Caco-2 (cell line): ENCODE measurements at regions of chr19 and their contacts with region 1.

Region 1: GRCh38 chr19:49539192-49539952 is 11.6 kb downstream of the RCN3 start:
- DNase-seq: no peak
- H3K4me3 ChIP-seq: no peak overlapping the region
- H3K4me3 Mint-ChIP-seq: no peak overlapping the region
- H3K27ac Mint-ChIP-seq: peak overlapping the region; percentile 27
- H3K4me1 ChIP-seq: no peaks in the 10 kb centered on the region
- H3K4me1 Mint-ChIP-seq: peaks cover 8% of the 10 kb centered on the region
- H3K27me3 ChIP-seq: no peaks in the 10 kb centered on the region
- H3K27me3 Mint-ChIP-seq: no peaks in the 10 kb centered on the region
- CTCF ChIP-seq: no peak

Region 2: DNA sequence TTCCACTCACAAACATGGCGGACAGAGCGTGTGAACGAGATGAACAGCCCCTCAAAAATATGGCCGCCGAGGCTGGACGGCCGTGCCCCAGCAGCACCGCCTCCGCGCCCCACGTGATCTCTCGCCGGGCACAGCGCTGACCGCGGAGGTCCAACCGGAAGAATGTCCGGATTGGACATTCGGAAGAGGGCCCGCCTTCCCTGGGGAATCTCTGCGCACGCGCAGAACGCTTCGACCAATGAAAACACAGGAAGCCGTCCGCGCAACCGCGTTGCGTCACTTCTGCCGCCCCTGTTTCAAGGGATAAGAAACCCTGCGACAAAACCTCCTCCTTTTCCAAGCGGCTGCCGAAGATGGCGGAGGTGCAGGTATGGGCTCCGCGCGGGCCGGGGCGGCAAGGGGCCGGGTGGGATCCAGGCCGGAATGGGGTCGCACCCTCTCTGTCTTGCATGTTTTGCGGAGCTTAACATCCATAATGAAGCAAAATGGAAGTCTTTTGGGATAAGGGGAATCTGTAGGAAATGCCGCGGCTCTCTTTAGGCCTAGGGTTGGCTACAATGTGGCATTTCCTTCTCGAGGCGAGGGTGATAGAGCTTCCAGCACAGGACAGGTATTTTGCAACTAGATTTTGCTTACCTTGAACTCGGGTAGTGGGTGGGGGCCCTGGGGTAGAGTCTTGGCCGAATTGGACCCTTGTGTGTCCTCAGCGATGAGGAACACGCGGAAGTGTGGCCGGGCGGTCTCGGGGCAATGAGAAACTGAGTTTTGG is 51.9 kb before region 1 on chr19 and contains the start of gene RPL13A:
- CTCF ChIA-PET with region 1: no interaction called
- POLR2A ChIA-PET with region 1: no interaction called
- intact Hi-C with region 1: no loop called
- DNase-seq: peak; percentile 99 to 100
- H3K4me3 ChIP-seq: peak within 1 kb of the TSS; percentile 88
- H3K4me3 Mint-ChIP-seq: peak within 1 kb of the TSS; percentile 97
- H3K27ac Mint-ChIP-seq: peak within 1 kb of the TSS; percentile 99
- H3K4me1 ChIP-seq: peaks cover 13% of the 10 kb centered on the region; the same call in 1 of the 2 replicates
- H3K4me1 Mint-ChIP-seq: no peaks in the 10 kb centered on the region
- H3K27me3 ChIP-seq: no peaks in the 10 kb centered on the region
- H3K27me3 Mint-ChIP-seq: no peaks in the 10 kb centered on the region
- CTCF ChIP-seq: no peak
- total RNA-seq, gene RPL13A: 2,726 and 2,880 TPM in 2 replicates

Region 3: DNA sequence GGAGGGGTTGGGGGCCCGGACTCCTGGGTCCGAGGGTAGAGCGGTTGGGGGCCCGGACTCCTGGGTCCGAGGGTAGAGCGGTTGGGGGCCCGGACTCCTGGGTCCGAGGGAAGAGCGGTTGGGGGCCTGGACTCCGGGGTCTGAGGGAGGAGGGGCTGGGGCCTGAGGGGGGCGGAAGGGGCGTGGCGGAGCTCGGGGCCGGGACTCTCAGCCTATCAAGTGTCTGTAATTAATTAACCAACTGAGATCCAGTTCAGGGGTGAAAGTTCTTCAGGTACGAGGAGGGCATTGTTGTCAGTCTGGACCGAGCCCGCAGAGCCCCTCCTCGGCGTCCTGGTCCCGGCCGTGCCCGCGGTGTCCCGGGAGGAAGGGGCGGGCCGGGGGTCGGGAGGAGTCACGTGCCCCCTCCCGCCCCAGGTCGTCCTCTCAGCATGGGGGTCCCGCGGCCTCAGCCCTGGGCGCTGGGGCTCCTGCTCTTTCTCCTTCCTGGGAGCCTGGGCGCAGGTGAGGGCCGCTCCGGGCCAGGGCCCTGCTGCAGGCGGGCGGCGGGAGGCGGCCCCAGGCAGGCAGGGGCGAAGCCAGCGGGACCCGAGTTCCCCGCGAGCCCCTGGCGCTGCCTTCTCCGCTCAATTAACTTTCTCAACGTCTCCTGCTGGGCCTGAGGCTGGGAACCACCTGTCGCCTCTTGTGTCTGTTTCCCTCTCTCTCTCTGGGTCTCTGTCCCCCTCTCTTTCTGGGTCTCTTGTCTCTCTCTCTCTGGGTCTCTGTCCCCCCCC is 26.2 kb before region 1 on chr19:
- CTCF ChIA-PET with region 1: interaction called, 3 read pairs
- POLR2A ChIA-PET with region 1: interaction called, 17 read pairs
- intact Hi-C with region 1: no loop called
- DNase-seq: peak; percentile 76 to 80
- H3K4me3 ChIP-seq: peak overlapping the region; percentile 86
- H3K4me3 Mint-ChIP-seq: peak overlapping the region; percentile 100
- H3K27ac Mint-ChIP-seq: peak overlapping the region; percentile 88
- H3K4me1 ChIP-seq: peaks cover 18% of the 10 kb centered on the region
- H3K4me1 Mint-ChIP-seq: peaks cover 24% of the 10 kb centered on the region
- H3K27me3 ChIP-seq: no peaks in the 10 kb centered on the region
- H3K27me3 Mint-ChIP-seq: no peaks in the 10 kb centered on the region
- CTCF ChIP-seq: no peak